Ovary (tissue), 10 donors: ENCODE measurements at regions of chr11 and their contacts with region 1.

Region 1: DNA sequence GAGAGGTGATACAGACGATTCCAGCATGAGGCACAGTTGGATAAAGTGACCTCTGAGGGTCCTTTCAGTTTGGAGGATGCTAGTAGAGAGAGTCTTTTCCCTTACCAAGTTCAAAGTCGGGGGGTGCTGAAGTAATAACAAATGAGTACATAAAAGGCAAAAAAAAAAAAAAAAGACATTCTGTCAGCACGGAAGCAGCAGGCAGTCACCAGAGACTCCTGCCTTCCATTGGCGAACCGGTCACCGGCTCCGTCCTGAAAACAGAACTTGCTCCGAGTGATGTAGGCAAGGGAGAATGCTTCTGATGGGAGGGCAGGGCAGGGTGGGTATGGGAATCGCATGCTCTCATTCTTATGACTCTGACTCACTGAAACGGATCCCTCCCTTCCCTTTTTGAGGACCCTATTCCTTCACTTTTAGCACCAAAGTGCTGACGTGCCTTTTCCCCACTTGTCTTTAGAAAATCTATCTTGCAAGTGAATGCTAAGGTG is 65.9 kb downstream of the PRR5L start:
- DNase-seq: peak in 2 of 5 donors; percentile 32 to 43
- H3K4me3 ChIP-seq: no peak overlapping the region
- H3K27ac ChIP-seq: no peak overlapping the region
- H3K4me1 ChIP-seq: no peaks in the 10 kb centered on the region
- H3K27me3 ChIP-seq: no peaks in the 10 kb centered on the region
- CTCF ChIP-seq: no peak
- EP300 ChIP-seq: no peak
- POLR2A ChIP-seq: no peak

Region 2: GRCh38 chr11:35735903-35736302 is 626.0 kb before region 1 on chr11:
- intact Hi-C with region 1: no loop called
- DNase-seq: no peak
- H3K4me3 ChIP-seq: no peak overlapping the region
- H3K27ac ChIP-seq: no peak overlapping the region
- H3K4me1 ChIP-seq: no peaks in the 10 kb centered on the region
- H3K27me3 ChIP-seq: no peaks in the 10 kb centered on the region
- CTCF ChIP-seq: no peak
- EP300 ChIP-seq: no peak
- POLR2A ChIP-seq: no peak

Region 3: GRCh38 chr11:36186340-36187175 is 175.4 kb before region 1 on chr11:
- intact Hi-C with region 1: loop called in 1 of 4 experiments (anchors 5 kb)
- DNase-seq: no peak
- H3K4me3 ChIP-seq: no peak overlapping the region
- H3K27ac ChIP-seq: no peak overlapping the region
- H3K4me1 ChIP-seq: peaks cover 4% of the 10 kb centered on the region
- H3K27me3 ChIP-seq: no peaks in the 10 kb centered on the region
- CTCF ChIP-seq: no peak
- EP300 ChIP-seq: no peak
- POLR2A ChIP-seq: no peak